ENCODE measurements at regions of chr6 and their contacts with region 1.

Region 1: DNA sequence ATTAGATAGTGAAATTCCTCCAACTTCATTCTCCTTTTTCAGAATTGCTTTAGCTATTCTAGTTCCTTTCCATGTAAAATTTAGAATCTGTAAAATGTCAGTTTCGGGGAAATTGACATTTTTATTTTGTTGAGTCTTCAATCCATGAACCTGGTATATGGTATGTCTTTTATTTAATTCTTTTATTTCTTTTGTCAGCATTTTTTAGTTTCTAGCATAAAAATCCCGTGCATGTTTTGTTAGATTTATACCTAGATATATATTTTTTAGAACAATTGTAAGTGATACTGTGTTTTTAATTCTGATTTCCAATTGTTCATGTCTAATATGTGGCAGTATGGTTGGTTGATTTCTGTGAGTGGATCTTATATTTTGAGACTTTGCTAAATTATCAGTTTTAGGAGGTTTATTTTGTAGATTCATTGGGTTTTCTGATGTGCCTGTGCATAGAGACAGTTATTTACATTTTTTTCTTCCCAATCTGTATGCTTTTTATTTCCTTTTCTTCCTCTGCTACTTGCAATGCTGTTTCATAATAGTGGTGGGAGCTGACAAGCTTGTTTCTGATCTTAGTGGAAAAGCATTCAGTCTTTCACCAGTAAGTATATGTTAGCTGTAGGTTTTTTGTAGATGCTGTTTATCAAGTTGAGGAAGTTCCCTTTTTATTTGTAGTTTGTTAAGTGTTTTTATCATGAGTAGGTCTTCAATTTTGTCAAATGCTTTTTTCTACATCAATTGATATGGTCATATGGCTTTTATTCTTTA is 13.7 kb downstream of the TAB2 start:
- DNase-seq: no peak
- H3K4me3 ChIP-seq: no peak overlapping the region
- H3K27ac ChIP-seq: no peak overlapping the region
- H3K4me1 ChIP-seq: peaks cover 0 to 27% (median 8%) of the 10 kb centered on the region in 4 experiments; a peak in 6 of 7 replicates
- H3K27me3 ChIP-seq: no peaks in the 10 kb centered on the region
- CTCF ChIP-seq: no peak
- EP300 ChIP-seq: no peak
- POLR2A ChIP-seq: no peak
- RAD21 ChIP-seq: no peak

Region 2: GRCh38 chr6:149112976-149113375 is 218.2 kb before region 1 on chr6:
- CTCF ChIA-PET with region 1: no interaction called
- POLR2A ChIA-PET with region 1: no interaction called
- DNase-seq: no peak
- H3K4me3 ChIP-seq: no peak overlapping the region
- H3K27ac ChIP-seq: no peak overlapping the region
- H3K4me1 ChIP-seq: no peaks in the 10 kb centered on the region
- H3K27me3 ChIP-seq: no peaks in the 10 kb centered on the region
- CTCF ChIP-seq: no peak
- EP300 ChIP-seq: no peak
- POLR2A ChIP-seq: no peak
- RAD21 ChIP-seq: no peak

Region 3: GRCh38 chr6:149316798-149317655 is 14.2 kb before region 1 on chr6:
- CTCF ChIA-PET with region 1: no interaction called
- POLR2A ChIA-PET with region 1: interaction called, 10 read pairs
- DNase-seq: peak; percentile 66 to 85
- H3K4me3 ChIP-seq: peak overlapping the region; percentile 62 to 93 (median 80)
- H3K27ac ChIP-seq: peak overlapping the region; percentile 82; the same call in 1 of the 2 replicates
- H3K4me1 ChIP-seq: peaks cover 0 to 2% (median 0%) of the 10 kb centered on the region in 4 experiments; a peak in 3 of 7 replicates
- H3K27me3 ChIP-seq: no peaks in the 10 kb centered on the region
- CTCF ChIP-seq: no peak
- EP300 ChIP-seq: peak; percentile 46 to 84; a peak in 2 of 3 replicates
- POLR2A ChIP-seq: peak; percentile 12 to 69; a peak in 2 of 3 replicates
- RAD21 ChIP-seq: no peak